Activated CD4-positive, alpha-beta T cell treated with anti-CD3 and anti-CD28 coated beads for 36 hours (primary cell): ENCODE measurements at regions of chr12 and their contacts with region 1.

Region 1: GRCh38 chr12:113479590-113480335 is 8.1 kb upstream of the LHX5 start:
- DNase-seq: peak; percentile 70
- ATAC-seq: no peak
- H3K4me3 Mint-ChIP-seq: peak overlapping the region; percentile 12
- H3K27ac Mint-ChIP-seq: no peak overlapping the region
- H3K4me1 Mint-ChIP-seq: peaks cover 4% of the 10 kb centered on the region
- H3K27me3 Mint-ChIP-seq: peaks cover 69% of the 10 kb centered on the region

Region 2: DNA sequence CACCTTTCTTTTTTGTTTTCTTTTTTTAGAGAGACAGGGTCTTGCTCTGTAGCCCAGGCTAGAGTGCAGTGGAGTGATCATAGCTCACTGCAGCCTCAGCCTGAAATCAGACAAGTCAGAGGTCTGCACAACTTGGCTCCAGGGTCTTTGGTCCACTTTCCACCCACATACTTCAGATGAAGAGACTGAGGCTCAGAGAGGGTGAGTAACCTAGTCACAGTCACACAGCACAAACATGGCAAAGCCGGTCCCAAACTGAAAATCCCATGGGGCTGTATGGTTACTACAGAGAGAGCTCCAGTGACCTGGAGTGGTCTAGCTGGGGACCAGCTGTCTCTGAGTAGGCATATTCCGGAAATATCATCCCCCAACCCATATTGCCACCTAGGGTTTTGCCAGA is 27.3 kb before region 1 on chr12:
- CTCF ChIA-PET with region 1: no interaction called
- POLR2A ChIA-PET with region 1: interaction called, 17 read pairs
- intact Hi-C with region 1: no loop called
- DNase-seq: no peak
- ATAC-seq: no peak
- H3K4me3 Mint-ChIP-seq: no peak overlapping the region
- H3K27ac Mint-ChIP-seq: no peak overlapping the region
- H3K4me1 Mint-ChIP-seq: no peaks in the 10 kb centered on the region
- H3K27me3 Mint-ChIP-seq: peaks cover 19% of the 10 kb centered on the region

Region 3: DNA sequence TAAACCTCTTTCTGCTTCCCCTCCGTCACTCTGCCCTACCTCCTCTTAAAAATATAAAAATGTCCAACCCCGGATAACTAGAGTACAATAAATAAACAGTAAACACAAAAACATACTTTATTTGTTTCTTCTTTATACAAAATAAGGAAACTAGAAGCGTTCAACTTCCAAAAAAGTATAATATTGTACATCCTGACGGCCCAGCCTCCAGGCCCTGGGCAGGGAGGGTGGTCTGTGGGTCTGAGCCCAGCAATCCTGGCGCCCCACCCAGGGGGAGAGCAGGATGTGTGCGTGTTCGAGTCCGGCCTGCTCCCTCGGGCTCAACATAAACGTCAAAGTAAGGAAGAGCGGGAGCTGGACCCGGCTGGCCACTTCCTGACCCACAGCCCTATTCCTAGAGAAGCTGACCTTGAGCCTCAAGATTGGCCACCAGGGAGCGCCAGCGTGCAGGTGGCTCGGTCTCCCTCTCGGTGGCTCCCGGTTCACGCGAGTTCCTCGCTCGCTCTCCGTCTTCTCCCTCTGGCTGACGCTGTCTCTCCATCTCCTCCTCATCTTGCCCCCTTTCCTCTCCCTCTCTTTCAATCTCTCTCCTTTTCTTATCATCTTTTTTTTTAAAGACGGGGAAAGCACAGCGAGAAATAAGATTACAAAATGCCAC is 17.5 kb before region 1 on chr12:
- CTCF ChIA-PET with region 1: interaction called, 10 read pairs
- POLR2A ChIA-PET with region 1: no interaction called
- intact Hi-C with region 1: loop called (anchors 2 kb)
- DNase-seq: peak; percentile 89
- ATAC-seq: peak; percentile 71
- H3K4me3 Mint-ChIP-seq: peak overlapping the region; percentile 64
- H3K27ac Mint-ChIP-seq: no peak overlapping the region
- H3K4me1 Mint-ChIP-seq: peaks cover 19% of the 10 kb centered on the region
- H3K27me3 Mint-ChIP-seq: peaks cover 59% of the 10 kb centered on the region

Region 4: DNA sequence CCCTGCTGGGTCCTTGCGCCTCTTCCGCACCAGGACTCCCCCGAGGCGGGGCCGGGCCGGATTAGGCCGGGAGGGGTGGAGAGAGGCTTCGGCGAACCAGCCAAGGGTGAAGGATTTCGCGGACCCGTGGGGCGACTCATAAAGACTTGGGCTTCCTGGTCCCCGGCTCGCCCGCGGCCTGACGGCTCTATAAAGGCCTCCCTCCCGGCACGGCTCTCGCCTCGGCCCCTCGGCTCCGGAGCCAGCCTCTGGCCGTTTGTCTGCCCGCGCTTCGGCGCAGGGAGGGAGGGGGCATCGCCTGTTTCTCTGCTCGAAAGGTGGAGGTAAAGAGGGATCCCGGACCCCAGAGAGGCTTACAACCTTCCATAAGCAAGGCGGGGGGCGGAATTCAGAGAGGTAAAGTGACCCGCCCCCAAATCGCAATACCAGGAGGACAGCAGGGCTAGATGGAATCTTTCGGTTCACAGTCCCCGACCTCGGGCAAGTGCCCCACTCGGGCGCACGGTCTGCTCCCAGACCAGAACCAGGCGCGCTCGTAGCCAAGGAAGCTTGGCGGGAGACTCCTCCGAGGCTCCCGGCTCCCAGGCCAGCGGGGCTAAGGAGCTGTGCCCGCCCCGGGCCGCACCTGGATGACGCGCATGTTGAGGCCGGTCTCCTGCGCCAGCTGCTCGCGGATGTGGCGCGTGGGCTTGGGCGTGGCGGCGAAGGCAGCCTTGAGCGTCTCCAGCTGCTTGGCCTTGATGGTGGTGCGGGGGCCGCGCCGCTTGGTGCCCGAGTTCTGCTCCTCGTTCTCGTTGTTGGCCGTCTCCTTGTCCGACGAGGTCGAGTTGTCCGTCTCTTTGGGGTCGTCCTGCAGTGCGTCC is 12.0 kb before region 1 on chr12:
- CTCF ChIA-PET with region 1: interaction called, 10 read pairs
- POLR2A ChIA-PET with region 1: no interaction called
- intact Hi-C with region 1: loop called (anchors 2 kb)
- DNase-seq: no peak
- ATAC-seq: no peak
- H3K4me3 Mint-ChIP-seq: no peak overlapping the region
- H3K27ac Mint-ChIP-seq: no peak overlapping the region
- H3K4me1 Mint-ChIP-seq: peaks cover 18% of the 10 kb centered on the region
- H3K27me3 Mint-ChIP-seq: peaks cover 64% of the 10 kb centered on the region

Region 5: GRCh38 chr12:113601656-113602263 is 122.0 kb after region 1 on chr12:
- CTCF ChIA-PET with region 1: no interaction called
- POLR2A ChIA-PET with region 1: no interaction called
- intact Hi-C with region 1: loop called in 1 of 2 experiments (anchors 5 kb)
- DNase-seq: peak; percentile 16
- ATAC-seq: no peak
- H3K4me3 Mint-ChIP-seq: no peak overlapping the region
- H3K27ac Mint-ChIP-seq: no peak overlapping the region
- H3K4me1 Mint-ChIP-seq: no peaks in the 10 kb centered on the region
- H3K27me3 Mint-ChIP-seq: peaks cover 13% of the 10 kb centered on the region